Breast epithelium (tissue), 4 donors: ENCODE measurements at regions of chr12 and their contacts with region 1.

Region 1: GRCh38 chr12:92021665-92022033 is 124.0 kb downstream of the BTG1 start:
- DNase-seq: no peak
- H3K4me3 ChIP-seq: no peak overlapping the region
- H3K27ac ChIP-seq: no peak overlapping the region
- H3K4me1 ChIP-seq: peaks cover 0 to 7% of the 10 kb centered on the region in 2 donors
- H3K27me3 ChIP-seq: no peaks in the 10 kb centered on the region
- CTCF ChIP-seq: no peak
- POLR2A ChIP-seq: no peak

Region 2: DNA sequence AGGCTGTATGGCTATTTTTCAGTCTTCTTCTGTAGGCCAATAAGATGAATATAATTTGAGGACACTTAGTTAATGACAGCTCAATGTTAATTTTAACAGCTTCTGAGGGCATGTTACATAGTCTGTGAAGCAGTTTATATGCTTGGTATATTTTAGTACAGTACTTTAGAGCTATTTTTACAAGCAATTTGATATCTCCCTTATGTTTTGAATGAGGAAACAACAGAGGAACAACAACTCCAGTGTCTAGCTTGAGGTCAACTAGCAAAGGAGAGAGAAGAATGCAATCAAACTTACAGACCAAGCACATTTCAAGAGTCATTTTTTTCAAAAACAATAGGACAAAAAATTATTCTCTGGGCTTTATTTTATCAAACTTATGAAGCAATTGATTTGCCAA is 369.9 kb before region 1 on chr12:
- intact Hi-C with region 1: loop called (anchors 5 kb)
- DNase-seq: no peak
- H3K4me3 ChIP-seq: no peak overlapping the region
- H3K27ac ChIP-seq: no peak overlapping the region
- H3K4me1 ChIP-seq: no peaks in the 10 kb centered on the region
- H3K27me3 ChIP-seq: no peaks in the 10 kb centered on the region
- CTCF ChIP-seq: no peak
- POLR2A ChIP-seq: no peak

Region 3: DNA sequence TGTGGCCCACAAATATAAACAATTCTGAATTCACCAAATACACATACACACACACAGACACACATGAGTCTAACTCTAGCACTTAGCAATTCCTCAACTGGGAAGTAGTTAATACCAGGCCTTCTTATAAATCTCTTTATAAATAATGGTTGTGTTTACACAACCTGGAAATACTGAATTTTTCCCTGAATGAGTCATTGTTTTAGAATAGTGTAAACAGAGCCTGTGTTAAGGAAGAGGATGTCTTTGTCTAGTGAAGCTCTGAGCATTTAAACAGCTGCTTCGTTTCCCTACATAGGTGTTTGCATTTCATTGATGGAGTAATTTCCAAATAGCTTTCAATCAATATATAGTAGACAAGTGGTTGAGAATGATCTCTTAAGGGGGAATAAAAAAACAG is 94.8 kb before region 1 on chr12:
- intact Hi-C with region 1: loop called (anchors 5 kb)
- DNase-seq: no peak
- H3K4me3 ChIP-seq: no peak overlapping the region
- H3K27ac ChIP-seq: no peak overlapping the region
- H3K4me1 ChIP-seq: no peaks in the 10 kb centered on the region
- H3K27me3 ChIP-seq: no peaks in the 10 kb centered on the region
- CTCF ChIP-seq: no peak
- POLR2A ChIP-seq: no peak

Region 4: DNA sequence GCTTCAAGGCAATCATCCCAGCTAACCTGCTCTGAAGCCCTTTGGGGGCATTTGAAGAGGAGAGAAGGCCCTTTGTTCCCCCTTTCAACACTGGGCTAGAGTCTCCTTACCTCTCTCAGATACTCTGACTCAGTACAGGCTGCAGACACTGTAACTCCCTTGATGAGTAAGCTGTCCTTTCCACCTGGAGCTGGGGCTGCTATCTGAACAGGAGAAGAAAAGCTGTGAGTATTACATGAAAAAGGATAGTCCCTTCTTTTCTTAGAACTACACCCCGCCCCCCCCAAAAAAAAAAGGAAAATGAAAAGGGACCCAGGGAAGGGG is 494.6 kb after region 1 on chr12:
- intact Hi-C with region 1: no loop called
- DNase-seq: no peak
- H3K4me3 ChIP-seq: no peak overlapping the region
- H3K27ac ChIP-seq: no peak overlapping the region
- H3K4me1 ChIP-seq: no peaks in the 10 kb centered on the region
- H3K27me3 ChIP-seq: no peaks in the 10 kb centered on the region
- CTCF ChIP-seq: no peak
- POLR2A ChIP-seq: no peak